Activated B cell treated with CpG ODN at 0.5 μM for 24 hours (primary cell): ENCODE measurements at regions of chr17 and their contacts with region 1.

Region 1: GRCh38 chr17:64343853-64344637 is 46.6 kb downstream of the PECAM1 start:
- DNase-seq: no peak
- ATAC-seq: no peak
- H3K4me3 Mint-ChIP-seq: no peak overlapping the region
- H3K27ac Mint-ChIP-seq: no peak overlapping the region
- H3K4me1 Mint-ChIP-seq: no peaks in the 10 kb centered on the region
- H3K27me3 Mint-ChIP-seq: no peaks in the 10 kb centered on the region
- CTCF ChIP-seq: no peak

Region 2: DNA sequence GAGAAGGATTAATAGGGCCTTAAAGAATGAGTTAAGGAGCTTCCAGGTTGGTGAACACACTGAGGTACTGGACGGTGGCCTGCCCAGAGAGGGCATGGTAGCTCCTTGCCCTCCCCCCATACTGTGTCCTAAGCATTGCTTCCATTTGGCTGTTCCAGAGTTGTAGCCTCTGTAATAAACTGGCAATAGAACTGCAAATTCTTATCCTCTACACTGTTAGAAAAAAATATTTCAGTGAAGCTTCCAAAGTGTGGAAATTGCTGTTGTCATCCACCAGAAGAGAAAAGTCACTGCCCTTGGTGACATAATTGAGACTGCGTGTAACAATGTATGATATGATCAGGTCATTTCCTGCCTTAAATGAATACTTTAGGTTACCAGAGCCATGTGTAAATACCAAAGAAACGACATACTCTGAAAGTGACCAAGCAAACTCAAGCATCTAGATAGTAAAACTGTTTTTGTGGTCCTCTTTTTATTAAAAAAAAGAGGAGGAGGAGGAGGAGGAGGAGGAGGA is 228.7 kb after region 1 on chr17:
- CTCF ChIA-PET with region 1: no interaction called
- POLR2A ChIA-PET with region 1: interaction called, 11 read pairs
- intact Hi-C with region 1: no loop called
- DNase-seq: no peak
- ATAC-seq: no peak
- H3K4me3 Mint-ChIP-seq: no peak overlapping the region
- H3K27ac Mint-ChIP-seq: no peak overlapping the region
- H3K4me1 Mint-ChIP-seq: no peaks in the 10 kb centered on the region
- H3K27me3 Mint-ChIP-seq: no peaks in the 10 kb centered on the region
- CTCF ChIP-seq: no peak